Tibial artery (tissue), 4 donors: ENCODE measurements at regions of chr12 and their contacts with region 1.

Region 1: DNA sequence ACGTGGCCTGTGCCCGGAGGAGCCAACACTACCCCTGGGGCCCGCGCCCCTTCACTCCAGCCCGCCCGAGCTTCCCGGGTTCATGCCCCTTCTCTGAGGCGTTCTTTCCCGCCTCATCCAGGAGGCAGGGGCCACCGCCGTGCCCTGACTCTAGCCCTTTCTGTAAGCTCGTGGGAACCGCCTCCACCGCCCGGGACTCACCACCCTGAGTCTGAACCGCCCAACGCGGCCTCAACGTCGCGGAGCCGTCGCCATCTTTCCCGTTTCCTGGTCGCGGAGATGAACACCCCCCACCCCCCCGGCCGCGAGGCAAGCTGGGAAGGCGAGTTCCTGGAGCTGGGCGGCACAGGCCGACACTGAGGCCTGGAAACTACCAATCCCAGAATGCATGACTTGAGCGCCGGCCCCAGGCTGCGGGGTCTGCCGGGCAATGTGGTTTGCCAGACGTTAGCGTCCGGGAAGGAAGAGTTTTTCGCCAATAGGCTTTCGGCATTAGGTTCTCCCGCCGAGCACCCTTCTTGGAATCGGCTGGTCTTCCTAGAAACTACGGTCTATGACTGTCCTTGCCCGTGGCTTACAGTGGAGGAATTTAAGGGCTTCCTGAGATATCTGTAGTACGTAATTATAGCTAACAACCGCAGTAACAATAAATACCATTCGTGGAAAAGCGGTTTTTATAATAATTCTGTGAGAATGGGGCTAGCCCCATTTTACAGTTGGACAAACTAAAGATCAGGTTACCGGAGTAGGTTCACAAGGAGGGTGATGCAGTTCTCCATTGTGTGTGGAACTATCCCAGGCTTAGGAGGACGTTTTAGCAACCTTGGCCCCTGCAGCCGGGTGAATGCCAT is at the start of gene DDX23:
- DNase-seq: peak; percentile 95 to 98
- H3K4me3 ChIP-seq: peak within 1 kb of the TSS; percentile 73 to 97
- H3K27ac ChIP-seq: peak within 1 kb of the TSS; percentile 84 to 90
- H3K4me1 ChIP-seq: peaks cover 0 to 30% (median 21%) of the 10 kb centered on the region in 4 donors
- H3K27me3 ChIP-seq: no peaks in the 10 kb centered on the region
- CTCF ChIP-seq: no peak

Region 2: DNA sequence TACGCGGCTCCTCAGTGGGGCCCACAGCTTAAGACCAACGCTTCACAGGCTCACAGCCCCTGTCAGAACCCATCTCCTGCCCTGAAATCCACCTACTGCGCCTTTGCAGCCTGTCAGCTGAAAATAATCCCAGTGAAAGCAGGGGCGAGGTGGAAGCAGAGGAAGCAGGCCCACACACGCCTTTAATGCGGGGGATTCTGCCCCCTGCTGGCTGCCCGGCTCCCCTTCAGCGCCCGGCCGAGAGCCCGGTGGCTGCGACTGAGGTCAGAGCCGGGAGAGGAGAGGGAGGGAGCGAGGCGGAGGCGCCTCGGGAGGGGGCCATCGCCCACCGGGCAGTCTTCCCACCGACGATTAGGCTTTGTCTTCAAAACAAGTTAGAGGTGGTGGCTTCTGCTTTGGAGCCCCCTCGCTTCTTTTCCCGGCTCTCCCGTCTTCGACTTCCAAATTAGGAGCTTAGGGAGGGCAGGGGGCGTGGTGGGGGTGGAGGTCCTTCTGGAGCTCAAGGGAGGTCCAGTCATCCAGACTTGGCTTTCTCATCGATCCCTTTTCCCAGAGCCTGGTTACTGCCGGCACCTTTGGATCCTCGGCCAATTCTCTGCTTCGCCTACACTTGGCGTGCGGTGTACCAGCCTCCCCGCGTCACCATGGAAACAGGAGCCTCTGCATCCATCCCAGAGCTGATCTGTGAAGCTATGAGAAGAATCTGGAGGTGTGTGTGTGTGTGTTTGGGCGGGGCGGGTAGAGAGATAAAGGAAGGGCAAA is 38.7 kb after region 1 on chr12:
- intact Hi-C with region 1: loop called (anchors 1 kb)
- DNase-seq: peak; percentile 53 to 84
- H3K4me3 ChIP-seq: peak overlapping the region; percentile 20 to 50
- H3K27ac ChIP-seq: no peak overlapping the region
- H3K4me1 ChIP-seq: peaks cover 0 to 9% (median 8%) of the 10 kb centered on the region in 4 donors
- H3K27me3 ChIP-seq: peaks cover 0 to 12% of the 10 kb centered on the region in 2 donors
- CTCF ChIP-seq: peak; percentile 88 to 92

Region 3: DNA sequence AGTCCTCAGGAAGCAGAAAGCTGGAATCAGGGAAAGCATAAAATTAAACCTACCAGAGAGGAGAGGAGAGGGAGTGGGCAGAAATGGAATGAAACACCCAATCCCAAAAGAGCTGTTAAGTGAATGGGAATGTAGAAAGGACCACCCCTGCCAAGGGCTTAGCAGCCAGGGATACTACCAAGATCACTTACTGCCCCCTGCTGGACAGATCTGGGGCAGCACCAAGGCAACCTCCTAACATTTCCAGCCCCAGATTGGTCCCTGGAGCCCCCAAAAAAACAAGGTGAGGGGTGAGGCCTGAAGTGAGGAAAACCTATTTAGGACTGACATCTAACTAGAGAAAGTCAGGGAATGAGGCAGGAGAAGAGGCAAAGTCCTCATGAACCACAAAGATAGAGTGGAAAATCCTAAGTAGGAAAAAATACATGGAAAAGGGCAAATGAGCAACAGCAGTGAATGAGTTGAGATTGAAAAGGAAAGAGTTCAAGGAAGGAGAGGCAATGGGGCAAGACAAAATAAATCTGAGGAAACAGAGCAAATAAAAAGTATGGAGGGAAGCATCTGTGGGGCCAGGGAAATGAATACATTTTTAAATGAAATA is 84.4 kb after region 1 on chr12:
- intact Hi-C with region 1: loop called (anchors 5 kb)
- DNase-seq: peak; percentile 75 to 76
- H3K4me3 ChIP-seq: no peak overlapping the region
- H3K27ac ChIP-seq: no peak overlapping the region
- H3K4me1 ChIP-seq: no peaks in the 10 kb centered on the region
- H3K27me3 ChIP-seq: no peaks in the 10 kb centered on the region
- CTCF ChIP-seq: peak; percentile 78 to 82